Posterior vena cava (tissue), 2 donors: ENCODE measurements at regions of chr9 and their contacts with region 1.

Region 1: DNA sequence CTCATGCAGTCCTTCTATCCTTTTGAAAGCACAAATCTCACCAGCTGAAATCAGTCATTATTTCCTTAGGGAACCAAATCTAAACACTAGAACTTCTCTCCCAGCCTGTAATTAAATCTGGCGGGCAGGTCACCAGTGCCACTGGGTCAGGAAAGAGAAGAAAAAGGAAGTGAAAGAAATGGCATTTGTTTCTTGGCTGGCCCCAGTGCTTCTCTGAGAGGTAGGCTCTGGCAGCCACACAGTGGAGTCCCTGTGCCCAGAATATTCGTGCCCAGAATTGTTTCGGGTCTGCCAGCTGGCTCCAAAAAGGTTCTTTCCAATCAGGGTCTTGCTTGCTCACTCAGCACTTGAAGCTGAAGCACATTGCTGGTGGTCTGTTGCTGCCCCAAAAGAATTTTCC is 133.9 kb upstream of the MTAP start:
- DNase-seq: no peak

Region 2: GRCh38 chr9:22682961-22683699 is 1014.6 kb after region 1 on chr9:
- intact Hi-C with region 1: loop called in 1 of 2 experiments (anchors 10 kb)
- DNase-seq: no peak